ENCODE measurements at regions of chr1 and their contacts with region 1.

Region 1: DNA sequence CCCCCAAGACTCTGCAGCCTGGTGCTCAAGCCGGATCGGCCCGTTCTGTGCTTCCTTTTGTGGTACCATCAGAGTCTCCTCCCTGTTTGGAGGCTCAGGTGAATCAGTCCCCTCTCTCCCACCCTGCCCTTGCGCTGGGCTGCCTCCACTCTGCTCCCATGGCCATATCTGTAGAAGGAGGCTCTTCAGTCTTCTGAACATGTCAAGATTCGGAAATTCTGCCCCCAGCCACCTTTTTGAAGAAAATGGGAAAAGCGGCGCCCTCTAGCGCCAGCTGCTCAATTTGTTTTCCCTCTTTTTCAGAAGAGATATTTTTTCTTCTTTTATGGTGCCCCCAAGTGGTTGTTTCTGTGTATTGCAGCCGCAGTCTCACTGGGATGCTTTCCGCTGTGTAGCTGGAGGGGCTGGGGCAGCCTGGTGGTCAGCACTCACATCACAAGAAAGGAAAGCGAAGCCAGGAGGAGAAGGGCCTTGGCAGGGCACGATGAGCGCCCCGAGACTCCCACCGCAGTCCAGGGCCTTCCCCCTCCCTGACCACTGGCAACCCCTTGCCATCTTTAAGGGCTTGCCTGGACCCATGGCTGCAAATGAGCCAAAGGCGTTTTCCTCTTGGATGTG is 58.4 kb upstream of the CACNA1E start:
- DNase-seq: peak; percentile 84
- H3K4me3 Mint-ChIP-seq: peak overlapping the region; percentile 56
- H3K27ac Mint-ChIP-seq: no peak overlapping the region
- H3K4me1 Mint-ChIP-seq: peaks cover 8% of the 10 kb centered on the region
- H3K27me3 Mint-ChIP-seq: peaks cover 38% of the 10 kb centered on the region
- CTCF ChIP-seq: peak; percentile 100

Region 2: DNA sequence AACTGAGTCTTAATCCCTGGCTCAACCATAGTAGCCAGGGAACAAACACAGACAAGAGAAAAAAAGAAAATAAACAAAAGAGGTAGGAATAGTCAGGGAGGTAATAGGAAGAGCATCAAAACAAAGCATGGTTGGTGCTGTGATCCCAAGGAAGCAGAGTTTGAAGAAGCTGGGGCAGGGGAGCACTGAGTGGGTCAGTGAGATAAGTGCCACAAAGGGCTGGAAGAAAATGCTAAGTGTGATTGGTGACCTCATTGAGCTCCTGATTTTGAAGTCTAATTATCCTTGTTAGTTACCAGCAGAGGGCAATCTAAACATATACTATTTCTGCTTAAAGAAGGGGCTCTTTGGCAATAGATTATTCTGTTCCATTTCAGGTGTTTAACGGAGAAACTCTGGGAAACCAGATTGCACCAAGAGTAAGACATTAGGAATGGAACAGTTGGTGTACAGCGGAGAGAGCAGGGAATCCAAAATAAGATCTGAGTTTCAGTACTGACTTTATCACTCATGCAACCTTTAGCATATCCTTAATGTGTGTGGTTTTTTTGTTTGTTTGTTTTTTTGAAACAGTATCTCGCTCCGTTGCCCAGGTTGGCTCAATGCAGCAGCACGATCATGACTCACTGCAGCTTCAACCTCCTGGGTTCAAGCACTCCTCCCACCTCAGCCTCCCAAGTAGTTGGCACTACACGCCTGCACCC is 542.9 kb before region 1 on chr1:
- CTCF ChIA-PET with region 1: interaction called, 4 read pairs
- POLR2A ChIA-PET with region 1: no interaction called
- intact Hi-C with region 1: loop called (anchors 2 kb)
- DNase-seq: peak; percentile 60
- H3K4me3 Mint-ChIP-seq: no peak overlapping the region
- H3K27ac Mint-ChIP-seq: peak overlapping the region; percentile 44
- H3K4me1 Mint-ChIP-seq: peaks cover 14% of the 10 kb centered on the region
- H3K27me3 Mint-ChIP-seq: no peaks in the 10 kb centered on the region
- CTCF ChIP-seq: peak; percentile 67

Region 3: DNA sequence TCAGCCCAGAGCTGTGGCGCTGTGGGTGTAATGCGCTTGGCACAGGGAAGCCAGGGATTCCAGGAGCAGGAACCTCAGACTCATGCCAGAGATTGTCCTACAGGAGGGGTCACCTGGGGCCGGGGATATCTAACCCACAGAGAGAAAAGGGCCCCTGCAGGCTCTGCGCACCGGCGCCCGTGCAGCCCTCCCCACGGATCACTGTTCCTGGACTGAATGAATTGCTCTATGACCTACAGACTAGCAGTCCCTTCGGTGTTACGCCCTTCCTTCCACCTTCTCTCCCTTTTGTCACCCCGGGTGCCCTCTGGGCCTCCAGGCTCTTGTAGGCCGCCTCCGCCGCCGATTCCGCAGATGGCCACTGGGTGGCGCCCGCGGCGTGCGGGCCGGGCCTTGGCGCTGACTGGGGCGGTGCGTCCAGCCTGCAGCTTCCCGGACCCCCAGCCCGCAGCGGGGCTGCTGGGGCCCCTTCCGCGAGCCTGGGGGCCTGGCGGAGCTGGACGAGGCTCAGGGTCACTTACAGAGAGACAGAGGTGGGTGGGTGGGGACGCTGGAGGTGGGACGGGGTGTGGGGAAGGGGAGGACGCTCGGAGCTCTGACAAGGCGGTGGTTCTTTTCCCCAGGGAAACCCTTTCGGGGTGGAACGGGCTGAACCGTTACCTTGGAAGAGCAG is 235.1 kb before region 1 on chr1:
- CTCF ChIA-PET with region 1: interaction called, 271 read pairs
- POLR2A ChIA-PET with region 1: interaction called, 6 read pairs
- intact Hi-C with region 1: loop called (anchors 1 kb)
- DNase-seq: peak; percentile 69
- H3K4me3 Mint-ChIP-seq: no peak overlapping the region
- H3K27ac Mint-ChIP-seq: no peak overlapping the region
- H3K4me1 Mint-ChIP-seq: peaks cover 6% of the 10 kb centered on the region
- H3K27me3 Mint-ChIP-seq: peaks cover 35% of the 10 kb centered on the region
- CTCF ChIP-seq: peak; percentile 100

Region 4: DNA sequence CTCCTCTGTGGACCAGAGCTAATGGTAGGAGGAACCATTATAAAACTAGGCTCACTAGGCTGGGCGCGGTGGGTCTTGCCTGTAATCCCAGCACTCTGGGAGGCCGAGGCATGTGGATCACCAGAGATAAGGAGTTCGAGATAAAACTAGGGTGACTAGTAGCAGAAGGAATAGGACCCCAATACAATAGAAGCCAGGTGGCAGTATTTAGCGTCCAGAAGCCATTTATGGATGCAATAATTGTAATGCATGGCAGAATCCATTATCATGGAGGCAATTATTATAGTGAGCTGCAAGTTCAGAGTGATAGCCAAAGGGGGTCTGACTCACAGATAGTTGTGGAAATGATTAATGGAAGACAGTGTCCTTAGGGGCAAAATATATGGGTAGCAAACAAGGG is 192.4 kb before region 1 on chr1:
- CTCF ChIA-PET with region 1: interaction called, 6 read pairs
- POLR2A ChIA-PET with region 1: no interaction called
- intact Hi-C with region 1: loop called (anchors 1 kb)
- DNase-seq: peak; percentile 34
- H3K4me3 Mint-ChIP-seq: no peak overlapping the region
- H3K27ac Mint-ChIP-seq: no peak overlapping the region
- H3K4me1 Mint-ChIP-seq: peaks cover 11% of the 10 kb centered on the region
- H3K27me3 Mint-ChIP-seq: no peaks in the 10 kb centered on the region
- CTCF ChIP-seq: peak; percentile 5

Region 5: DNA sequence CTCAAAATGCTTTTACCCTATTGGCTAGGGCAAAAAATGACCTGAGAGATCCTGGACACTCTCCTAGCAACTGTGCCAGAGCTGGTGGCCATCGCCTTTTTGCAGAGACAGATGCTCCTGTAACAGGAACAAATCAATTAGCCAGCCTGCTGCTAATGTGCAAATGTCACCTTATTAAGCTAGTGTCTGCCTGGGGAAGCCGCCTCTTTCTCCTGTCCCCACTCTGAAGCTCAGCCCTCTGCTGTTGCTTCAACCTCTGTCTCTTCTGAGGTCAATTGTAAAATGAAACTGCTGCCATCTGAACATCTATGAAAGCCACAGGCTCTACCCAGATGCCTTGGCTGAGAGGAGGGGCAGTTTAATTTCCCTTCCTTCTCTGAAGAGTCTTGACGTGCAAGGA is 27.1 kb before region 1 on chr1:
- CTCF ChIA-PET with region 1: interaction called, 13 read pairs
- POLR2A ChIA-PET with region 1: interaction called, 3 read pairs
- intact Hi-C with region 1: no loop called
- DNase-seq: no peak
- H3K4me3 Mint-ChIP-seq: no peak overlapping the region
- H3K27ac Mint-ChIP-seq: no peak overlapping the region
- H3K4me1 Mint-ChIP-seq: peaks cover 2% of the 10 kb centered on the region
- H3K27me3 Mint-ChIP-seq: no peaks in the 10 kb centered on the region
- CTCF ChIP-seq: no peak

Region 6: GRCh38 chr1:181448461-181448860 is 23.6 kb after region 1 on chr1:
- CTCF ChIA-PET with region 1: interaction called, 21 read pairs
- POLR2A ChIA-PET with region 1: interaction called, 3 read pairs
- intact Hi-C with region 1: no loop called
- DNase-seq: no peak
- H3K4me3 Mint-ChIP-seq: no peak overlapping the region
- H3K27ac Mint-ChIP-seq: no peak overlapping the region
- H3K4me1 Mint-ChIP-seq: peaks cover 6% of the 10 kb centered on the region
- H3K27me3 Mint-ChIP-seq: peaks cover 11% of the 10 kb centered on the region
- CTCF ChIP-seq: no peak

Region 7: GRCh38 chr1:181514298-181515290 is 89.7 kb after region 1 on chr1:
- CTCF ChIA-PET with region 1: no interaction called
- POLR2A ChIA-PET with region 1: no interaction called
- intact Hi-C with region 1: no loop called
- DNase-seq: no peak
- H3K4me3 Mint-ChIP-seq: no peak overlapping the region
- H3K27ac Mint-ChIP-seq: no peak overlapping the region
- H3K4me1 Mint-ChIP-seq: no peaks in the 10 kb centered on the region
- H3K27me3 Mint-ChIP-seq: peaks cover 11% of the 10 kb centered on the region
- CTCF ChIP-seq: no peak

Measured in MCF 10A (cell line).